ENCODE measurements at regions of chr14 and their contacts with region 1.

Region 1: GRCh38 chr14:23269193-23269592 is 16.7 kb downstream of the HOMEZ start:
- DNase-seq: no peak
- H3K4me3 ChIP-seq: no peak overlapping the region
- H3K27ac ChIP-seq: no peak overlapping the region
- H3K4me1 ChIP-seq: no peaks in the 10 kb centered on the region
- H3K27me3 ChIP-seq: no peaks in the 10 kb centered on the region
- CTCF ChIP-seq: no peak
- EP300 ChIP-seq: no peak
- POLR2A ChIP-seq: no peak

Region 2: DNA sequence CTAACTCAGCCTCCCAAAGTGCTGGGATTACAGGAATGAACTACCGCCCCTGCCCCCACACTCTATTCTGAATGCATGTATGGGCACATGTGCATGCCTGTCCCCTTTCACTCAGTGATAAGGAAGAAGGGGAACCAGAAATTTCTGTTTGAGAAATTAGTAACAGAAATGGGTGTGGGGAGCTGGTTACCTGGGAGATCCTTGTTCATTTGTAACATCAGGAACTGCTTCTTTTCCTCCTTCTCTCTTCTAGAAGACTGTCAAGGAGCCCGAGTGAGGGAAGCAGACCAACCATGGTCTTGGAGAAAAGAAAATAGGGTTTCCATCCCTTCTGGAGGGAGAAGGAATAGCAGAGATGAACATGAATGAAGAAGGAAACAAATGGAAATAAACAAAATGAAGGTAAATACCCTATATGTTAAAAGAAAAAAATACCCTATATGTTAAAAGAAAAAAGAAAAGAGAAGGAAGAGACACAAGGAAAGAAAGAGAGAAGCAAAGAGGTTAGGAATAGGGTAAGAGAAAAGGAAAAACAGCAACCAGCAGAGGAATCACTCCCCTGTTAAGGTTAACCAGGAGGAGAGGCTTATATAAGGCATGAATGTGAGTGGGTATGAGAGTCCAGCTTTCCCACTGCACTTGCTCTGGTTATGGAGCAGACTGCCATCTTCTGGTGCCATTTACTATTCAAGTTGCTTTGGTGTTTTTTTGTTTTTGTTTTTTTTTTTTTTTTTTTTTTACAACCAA is 30.2 kb after region 1 on chr14:
- in situ Hi-C with region 1: no loop called
- intact Hi-C with region 1: loop called (anchors 2 kb)
- DNase-seq: no peak
- H3K4me3 ChIP-seq: no peak overlapping the region
- H3K27ac ChIP-seq: peak overlapping the region; percentile 99 to 100 (median 99)
- H3K4me1 ChIP-seq: peaks cover 7 to 33% (median 23%) of the 10 kb centered on the region in 4 donors
- H3K27me3 ChIP-seq: no peaks in the 10 kb centered on the region
- CTCF ChIP-seq: no peak
- EP300 ChIP-seq: no peak
- POLR2A ChIP-seq: no peak

Measured in transverse colon (tissue), 4 donors.